ENCODE measurements at regions of chr6 and their contacts with region 1.

Region 1: GRCh38 chr6:3023663-3024483 is 24.2 kb downstream of the NQO2 start:
- DNase-seq: peak; percentile 55 to 91 (median 72)
- ATAC-seq: peak; percentile 87 to 90 (median 88)
- H3K4me3 ChIP-seq: peak overlapping the region; percentile 60 to 63
- H3K4me3 Mint-ChIP-seq: peak overlapping the region; percentile 88 to 92 (median 90)
- H3K27ac ChIP-seq: peak overlapping the region; percentile 80
- H3K27ac Mint-ChIP-seq: peak overlapping the region; percentile 94 to 98
- H3K4me1 ChIP-seq: peaks cover 24 to 64% of the 10 kb centered on the region in 2 experiments
- H3K4me1 Mint-ChIP-seq: peaks cover 46 to 61% (median 56%) of the 10 kb centered on the region in 3 donors
- H3K27me3 ChIP-seq: no peaks in the 10 kb centered on the region
- H3K27me3 Mint-ChIP-seq: no peaks in the 10 kb centered on the region

Region 2: DNA sequence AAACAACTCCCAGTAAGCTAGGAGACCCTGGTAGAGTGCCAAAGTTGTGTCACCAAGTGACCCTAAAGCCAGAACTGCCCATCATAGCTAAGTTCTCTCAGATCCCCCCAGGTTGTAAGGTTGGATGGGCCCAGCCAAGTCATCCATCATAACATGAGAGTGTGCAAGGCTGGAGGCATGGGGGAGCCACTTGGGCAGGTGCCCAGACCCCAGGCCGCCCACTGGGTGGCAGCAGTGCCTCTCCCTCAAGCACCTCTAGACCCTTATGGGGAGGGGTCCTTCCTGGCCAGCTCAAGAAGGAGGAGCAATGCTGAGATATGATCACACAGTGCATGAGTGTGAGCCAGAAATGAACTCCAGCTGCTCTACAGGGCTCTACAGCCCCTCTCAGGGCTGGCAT is 427.7 kb before region 1 on chr6:
- CTCF ChIA-PET with region 1: no interaction called
- POLR2A ChIA-PET with region 1: no interaction called
- DNase-seq: no peak
- ATAC-seq: no peak
- H3K4me3 ChIP-seq: no peak overlapping the region
- H3K4me3 Mint-ChIP-seq: no peak overlapping the region
- H3K27ac ChIP-seq: no peak overlapping the region
- H3K27ac Mint-ChIP-seq: no peak overlapping the region
- H3K4me1 ChIP-seq: no peaks in the 10 kb centered on the region
- H3K4me1 Mint-ChIP-seq: no peaks in the 10 kb centered on the region
- H3K27me3 ChIP-seq: peaks cover 0 to 35% of the 10 kb centered on the region in 2 experiments
- H3K27me3 Mint-ChIP-seq: peaks cover 18 to 20% of the 10 kb centered on the region in 2 donors

Region 3: DNA sequence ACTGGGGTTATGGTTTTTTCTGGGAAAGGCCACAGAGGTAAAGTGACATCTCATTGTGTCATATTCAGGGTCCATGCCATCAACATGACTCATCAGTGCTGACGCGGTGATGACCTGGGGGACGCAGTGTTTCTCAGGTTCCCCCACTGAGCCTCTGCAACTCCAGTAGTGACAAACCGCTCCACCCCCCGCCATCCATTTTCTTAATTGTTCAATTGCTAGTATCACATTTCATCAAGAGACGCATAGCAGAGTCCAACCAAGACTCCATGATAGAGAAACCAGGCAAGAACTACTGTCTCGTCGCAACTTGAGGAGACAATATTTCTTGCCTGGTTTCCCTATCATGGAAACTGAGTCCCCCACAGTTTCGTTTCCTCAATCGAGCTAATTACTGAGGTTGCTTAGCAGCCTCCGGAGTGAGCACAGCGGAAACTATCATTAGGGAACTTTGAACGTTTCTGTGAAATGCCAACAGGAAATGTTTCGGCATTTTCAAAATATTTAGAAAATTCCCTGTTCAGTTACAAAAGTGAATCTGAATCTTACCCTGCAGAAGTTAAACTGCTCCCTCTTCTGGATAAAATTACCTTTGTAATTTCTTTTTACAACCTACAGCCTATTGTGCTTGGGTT is 170.0 kb before region 1 on chr6:
- CTCF ChIA-PET with region 1: no interaction called
- POLR2A ChIA-PET with region 1: interaction called in 1 of 2 experiments, 14 read pairs
- DNase-seq: peak in 34 of 35 experiments; percentile 41 to 82 (median 64)
- ATAC-seq: peak; percentile 12 to 27 (median 19)
- H3K4me3 ChIP-seq: peak overlapping the region in 1 of 2 donors; percentile 38
- H3K4me3 Mint-ChIP-seq: peak overlapping the region; percentile 63 to 72 (median 67)
- H3K27ac ChIP-seq: peak overlapping the region; percentile 94
- H3K27ac Mint-ChIP-seq: peak overlapping the region; percentile 98 to 99
- H3K4me1 ChIP-seq: peaks cover 50 to 68% of the 10 kb centered on the region in 2 experiments
- H3K4me1 Mint-ChIP-seq: peaks cover 62 to 69% (median 67%) of the 10 kb centered on the region in 3 donors
- H3K27me3 ChIP-seq: no peaks in the 10 kb centered on the region
- H3K27me3 Mint-ChIP-seq: no peaks in the 10 kb centered on the region

Region 4: GRCh38 chr6:2999618-3000557 is 24.0 kb before region 1 on chr6 and contains the start of gene NQO2:
- CTCF ChIA-PET with region 1: interaction called, 3 to 12 read pairs
- POLR2A ChIA-PET with region 1: interaction called in 1 of 2 experiments, 3 read pairs
- DNase-seq: peak; percentile 69 to 97 (median 88)
- ATAC-seq: peak; percentile 79 to 89 (median 85)
- H3K4me3 ChIP-seq: peak within 1 kb of the TSS; percentile 77 to 86
- H3K4me3 Mint-ChIP-seq: peak within 1 kb of the TSS; percentile 85 to 89 (median 88)
- H3K27ac ChIP-seq: peak within 1 kb of the TSS; percentile 78
- H3K27ac Mint-ChIP-seq: peak within 1 kb of the TSS; percentile 85 to 86
- H3K4me1 ChIP-seq: peaks cover 7 to 28% of the 10 kb centered on the region in 2 experiments
- H3K4me1 Mint-ChIP-seq: peaks cover 21 to 36% (median 30%) of the 10 kb centered on the region in 3 donors
- H3K27me3 ChIP-seq: no peaks in the 10 kb centered on the region
- H3K27me3 Mint-ChIP-seq: no peaks in the 10 kb centered on the region
- total RNA-seq, gene NQO2: 9.1 to 54.6 (median 33.0) TPM